ENCODE measurements at regions of chr17 and their contacts with region 1.

Region 1: DNA sequence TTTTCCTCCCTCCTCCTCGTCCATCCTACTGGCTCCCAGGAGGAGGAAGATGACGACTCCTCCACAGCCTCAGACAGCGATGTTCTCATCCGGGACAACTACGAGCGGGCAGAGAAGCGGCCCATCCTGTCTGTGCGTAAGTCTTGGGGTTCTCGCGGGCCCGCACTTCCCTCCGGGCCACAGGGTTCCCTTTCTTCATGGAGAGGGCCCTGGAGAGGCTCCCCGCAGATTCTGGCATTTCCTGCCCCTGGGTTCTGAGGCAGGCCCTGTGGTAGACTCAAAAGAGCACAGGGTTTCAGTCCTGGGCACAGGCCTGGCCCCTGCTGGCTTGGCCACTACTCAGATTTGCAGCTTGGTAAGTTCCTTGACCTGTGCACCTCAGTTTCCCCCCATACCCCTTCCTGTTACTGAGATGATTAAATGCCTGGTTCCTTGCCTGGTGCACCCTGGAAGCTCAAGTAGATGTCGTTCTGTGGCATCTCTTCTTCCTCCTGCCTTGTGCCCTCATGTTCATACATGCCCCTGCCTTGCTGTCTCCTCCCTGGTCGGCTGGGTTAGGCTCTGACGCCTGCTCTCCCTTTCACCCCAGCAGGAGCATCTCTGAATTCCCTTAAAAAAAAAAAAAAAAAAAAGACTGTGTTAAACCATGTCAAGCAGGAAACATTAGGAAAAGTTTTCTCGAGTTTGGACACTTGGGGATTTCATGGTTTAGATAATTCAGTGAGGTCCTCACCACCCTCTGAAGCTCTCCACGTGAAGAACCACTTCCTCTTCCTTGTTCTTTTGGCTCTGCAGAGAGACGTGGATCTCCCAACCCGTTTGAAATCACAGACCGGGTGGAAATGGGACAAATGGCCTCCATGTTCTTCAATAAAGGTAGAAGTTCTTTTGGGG is 14.3 kb upstream of the NAT9 start:
- DNase-seq: no peak
- ATAC-seq: no peak
- H3K4me3 ChIP-seq: no peak overlapping the region
- H3K27ac ChIP-seq: no peak overlapping the region
- H3K4me1 ChIP-seq: no peaks in the 10 kb centered on the region
- H3K27me3 ChIP-seq: no peaks in the 10 kb centered on the region
- CTCF ChIP-seq: no peak

Region 2: GRCh38 chr17:74639704-74640151 is 150.7 kb before region 1 on chr17:
- CTCF ChIA-PET with region 1: no interaction called
- POLR2A ChIA-PET with region 1: no interaction called
- in situ Hi-C with region 1: no loop called
- intact Hi-C with region 1: no loop called
- DNase-seq: no peak
- ATAC-seq: no peak
- H3K4me3 ChIP-seq: no peak overlapping the region
- H3K27ac ChIP-seq: no peak overlapping the region
- H3K4me1 ChIP-seq: no peaks in the 10 kb centered on the region
- H3K27me3 ChIP-seq: peaks cover 23% of the 10 kb centered on the region
- CTCF ChIP-seq: no peak

Region 3: GRCh38 chr17:74736513-74737298 is 53.7 kb before region 1 on chr17 and contains the start of gene RAB37:
- CTCF ChIA-PET with region 1: no interaction called
- POLR2A ChIA-PET with region 1: no interaction called
- in situ Hi-C with region 1: no loop called
- intact Hi-C with region 1: no loop called
- DNase-seq: no peak
- ATAC-seq: peak; percentile 57
- H3K4me3 ChIP-seq: peak within 1 kb of the TSS; percentile 28 to 53
- H3K27ac ChIP-seq: no peak within 1 kb of the TSS
- H3K4me1 ChIP-seq: peaks cover 7% of the 10 kb centered on the region
- H3K27me3 ChIP-seq: 0 out of 2 replicates have a peak, but pooled peaks cover 3% of the 10 kb centered on the region
- CTCF ChIP-seq: peak; percentile 85
- total RNA-seq, gene RAB37: 1.5 TPM

Region 4: GRCh38 chr17:74748529-74749365 is 41.7 kb before region 1 on chr17 and contains the start of gene NHERF1:
- CTCF ChIA-PET with region 1: interaction called, 16 read pairs
- POLR2A ChIA-PET with region 1: no interaction called
- in situ Hi-C with region 1: no loop called
- intact Hi-C with region 1: no loop called
- DNase-seq: no peak
- ATAC-seq: peak; percentile 95
- H3K4me3 ChIP-seq: peak within 1 kb of the TSS; percentile 76 to 95
- H3K27ac ChIP-seq: peak within 1 kb of the TSS; percentile 87
- H3K4me1 ChIP-seq: peaks cover 38% of the 10 kb centered on the region
- H3K27me3 ChIP-seq: no peaks in the 10 kb centered on the region
- CTCF ChIP-seq: no peak
- total RNA-seq, gene NHERF1: 90.8 TPM

Region 5: GRCh38 chr17:74859459-74860228 is 69.2 kb after region 1 on chr17 and contains the start of gene GRIN2C:
- CTCF ChIA-PET with region 1: interaction called, 19 read pairs
- POLR2A ChIA-PET with region 1: no interaction called
- in situ Hi-C with region 1: no loop called
- intact Hi-C with region 1: loop called (anchors 1 kb)
- DNase-seq: no peak
- ATAC-seq: no peak
- H3K4me3 ChIP-seq: peak within 1 kb of the TSS; percentile 14 to 24
- H3K27ac ChIP-seq: no peak within 1 kb of the TSS
- H3K4me1 ChIP-seq: peaks cover 21% of the 10 kb centered on the region
- H3K27me3 ChIP-seq: peaks cover 23% of the 10 kb centered on the region
- CTCF ChIP-seq: peak; percentile 89
- total RNA-seq, gene GRIN2C: 0.10 TPM

Region 6: GRCh38 chr17:74864866-74865395 is 74.5 kb after region 1 on chr17:
- CTCF ChIA-PET with region 1: interaction called, 17 read pairs
- POLR2A ChIA-PET with region 1: no interaction called
- in situ Hi-C with region 1: no loop called
- intact Hi-C with region 1: loop called (anchors 1 kb)
- DNase-seq: peak; percentile 47
- ATAC-seq: peak; percentile 64
- H3K4me3 ChIP-seq: no peak overlapping the region
- H3K27ac ChIP-seq: no peak overlapping the region
- H3K4me1 ChIP-seq: peaks cover 18% of the 10 kb centered on the region
- H3K27me3 ChIP-seq: peaks cover 10% of the 10 kb centered on the region; the same call in 1 of the 2 replicates
- CTCF ChIP-seq: peak; percentile 98

Region 7: DNA sequence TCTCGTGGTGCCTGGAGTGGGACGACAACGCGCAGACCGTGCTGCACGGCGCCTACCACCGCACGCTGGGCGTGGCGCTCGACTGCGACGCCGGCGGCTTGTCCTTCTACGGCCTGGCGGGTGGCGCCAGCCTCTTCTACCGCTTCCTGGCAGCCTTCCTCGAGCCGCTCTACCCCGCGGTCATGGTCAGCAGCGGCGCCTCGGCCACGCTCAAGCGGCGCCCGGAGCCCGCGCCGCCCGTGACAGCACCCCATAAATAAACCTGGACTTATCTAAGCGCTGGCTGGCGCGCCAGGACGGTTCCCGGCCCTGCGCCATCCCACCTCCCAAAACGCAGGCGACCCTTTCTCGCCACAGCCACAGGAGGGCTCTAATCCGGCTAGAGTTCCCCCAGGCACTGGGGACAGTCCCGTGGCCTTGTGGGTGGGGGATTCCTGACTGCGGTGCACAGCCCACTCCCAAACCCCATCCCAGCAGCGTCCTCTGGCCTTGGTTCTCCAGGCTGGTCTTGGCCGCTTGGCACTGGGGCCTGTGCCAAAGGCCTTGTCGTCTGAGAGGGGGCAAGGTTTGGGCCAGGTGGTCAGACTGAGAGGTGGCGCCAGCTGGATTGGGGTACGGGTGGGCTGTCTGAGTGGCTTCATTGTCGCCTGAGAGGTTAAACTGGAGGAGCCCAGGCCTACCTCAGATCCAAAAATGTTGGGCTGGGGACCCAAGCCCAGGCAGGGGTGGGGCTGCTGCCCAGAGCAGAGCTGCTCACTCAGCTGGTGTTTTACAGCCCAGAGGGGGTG is 287.3 kb after region 1 on chr17:
- CTCF ChIA-PET with region 1: no interaction called
- POLR2A ChIA-PET with region 1: no interaction called
- in situ Hi-C with region 1: no loop called
- intact Hi-C with region 1: no loop called
- DNase-seq: no peak
- ATAC-seq: no peak
- H3K4me3 ChIP-seq: no peak overlapping the region
- H3K27ac ChIP-seq: peak overlapping the region; percentile 49
- H3K4me1 ChIP-seq: peaks cover 16% of the 10 kb centered on the region
- H3K27me3 ChIP-seq: no peaks in the 10 kb centered on the region
- CTCF ChIP-seq: no peak

Measured in Panc1 (cell line).